ENCODE measurements at regions of chr10 and their contacts with region 1.

Region 1: DNA sequence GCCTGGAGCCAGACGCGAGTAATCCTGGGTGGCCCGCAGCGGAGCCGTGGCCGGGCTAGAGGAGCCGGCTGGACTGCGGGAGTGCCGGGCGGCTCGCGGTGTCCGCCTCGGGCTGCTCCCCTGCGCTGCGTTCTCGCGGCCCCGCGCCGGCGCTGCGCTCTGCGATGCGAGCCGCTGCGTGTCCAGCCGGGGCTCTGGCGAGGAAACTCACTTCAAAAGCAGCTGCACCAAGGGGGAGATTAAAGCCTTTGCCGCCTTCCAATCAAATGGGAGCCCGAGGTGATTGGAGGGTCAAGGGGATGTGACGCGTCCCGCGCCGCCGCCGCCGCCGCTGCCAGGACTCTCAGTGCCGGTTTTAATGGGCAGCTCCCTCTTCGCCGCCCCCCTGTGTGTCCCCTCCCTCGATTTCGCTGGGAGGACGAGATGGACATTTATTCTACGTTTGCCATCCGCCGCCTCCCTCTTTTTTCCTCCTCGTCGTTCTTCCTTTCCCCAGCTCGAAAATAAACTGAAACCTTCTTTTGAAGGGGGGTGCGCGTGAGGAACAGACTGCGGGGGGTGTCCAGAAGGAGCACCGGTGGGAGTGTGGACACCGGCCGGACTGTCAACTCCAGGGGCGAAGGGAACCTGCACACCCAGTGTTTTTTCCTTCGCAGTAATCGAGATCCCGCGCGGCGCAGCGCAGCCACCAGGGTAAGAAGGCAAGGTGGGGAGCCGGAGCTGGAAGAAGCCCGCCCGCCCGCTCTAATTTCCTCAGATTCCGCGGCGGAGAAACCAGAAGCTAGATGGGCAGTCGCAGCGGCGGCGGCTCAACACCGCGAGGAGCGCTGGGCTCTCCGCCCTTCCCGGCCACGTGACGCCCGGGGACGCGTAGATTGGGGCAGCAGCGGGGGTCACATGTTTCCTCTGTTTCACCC is at the start of gene ZNF503:
- DNase-seq: peak; percentile 94
- ATAC-seq: peak; percentile 49
- H3K4me3 Mint-ChIP-seq: peak within 1 kb of the TSS; percentile 70
- H3K27ac Mint-ChIP-seq: peak within 1 kb of the TSS; percentile 46; the same call in 1 of the 2 replicates
- H3K4me1 Mint-ChIP-seq: peaks cover 42% of the 10 kb centered on the region
- H3K27me3 Mint-ChIP-seq: peaks cover 97% of the 10 kb centered on the region
- CTCF ChIP-seq: no peak
- total RNA-seq, gene ZNF503: 0.25 to 0.39 TPM (median 0.34 TPM) in 3 replicates

Region 2: DNA sequence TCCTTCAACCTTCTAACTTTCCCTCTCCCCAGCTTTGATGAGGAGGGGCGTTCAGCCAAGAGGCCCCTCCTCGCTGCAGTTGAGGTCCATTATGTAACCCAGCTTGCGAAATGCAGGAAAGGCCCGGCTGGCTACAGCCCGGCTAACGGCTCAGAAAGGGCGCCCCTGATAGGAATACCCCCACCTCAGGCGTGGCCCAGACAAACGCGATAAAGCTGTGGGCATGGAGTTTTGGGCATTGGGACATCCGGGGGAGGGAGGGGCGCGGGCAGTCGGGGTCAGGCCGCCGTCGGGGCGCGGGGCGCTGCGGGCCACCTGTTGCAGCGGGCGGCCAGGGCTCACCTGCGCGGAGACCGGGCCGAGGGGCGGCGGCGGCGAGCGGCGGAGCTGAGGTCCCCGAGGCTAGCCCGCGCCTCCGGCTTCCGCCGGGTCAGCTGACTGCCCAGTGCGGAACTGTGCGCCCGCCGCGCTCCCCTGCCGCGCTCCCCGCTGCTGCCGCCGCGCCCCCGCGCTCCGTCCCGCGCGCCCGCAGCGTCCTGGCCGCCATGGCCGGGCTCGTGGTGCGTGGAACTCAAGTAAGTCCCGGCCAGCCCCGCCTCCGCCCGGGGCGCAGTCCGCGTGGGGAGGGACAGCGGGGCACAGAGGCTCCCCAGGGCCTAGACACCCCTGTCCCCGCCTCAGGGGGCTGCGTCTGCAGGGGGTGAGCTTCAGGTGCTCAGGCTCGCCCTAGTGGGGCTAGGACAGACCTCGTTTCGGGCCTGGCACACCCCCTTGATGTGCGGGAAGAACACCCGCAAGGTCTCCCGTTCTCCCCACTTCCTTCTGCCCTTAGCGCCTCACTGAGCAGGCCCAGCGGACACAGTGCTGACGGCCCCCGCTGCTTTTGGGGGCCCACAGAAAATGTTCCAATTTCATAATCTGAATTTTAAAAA is 29.6 kb after region 1 on chr10 and contains the start of gene LRMDA:
- CTCF ChIA-PET with region 1: interaction called, 12 read pairs
- POLR2A ChIA-PET with region 1: no interaction called
- DNase-seq: peak; percentile 38
- ATAC-seq: peak; percentile 41
- H3K4me3 Mint-ChIP-seq: peak within 1 kb of the TSS; percentile 68
- H3K27ac Mint-ChIP-seq: no peak within 1 kb of the TSS
- H3K4me1 Mint-ChIP-seq: peaks cover 42% of the 10 kb centered on the region
- H3K27me3 Mint-ChIP-seq: peaks cover 96% of the 10 kb centered on the region
- CTCF ChIP-seq: no peak
- total RNA-seq, gene LRMDA: 0.48 to 0.92 TPM (median 0.78 TPM) in 3 replicates

Region 3: DNA sequence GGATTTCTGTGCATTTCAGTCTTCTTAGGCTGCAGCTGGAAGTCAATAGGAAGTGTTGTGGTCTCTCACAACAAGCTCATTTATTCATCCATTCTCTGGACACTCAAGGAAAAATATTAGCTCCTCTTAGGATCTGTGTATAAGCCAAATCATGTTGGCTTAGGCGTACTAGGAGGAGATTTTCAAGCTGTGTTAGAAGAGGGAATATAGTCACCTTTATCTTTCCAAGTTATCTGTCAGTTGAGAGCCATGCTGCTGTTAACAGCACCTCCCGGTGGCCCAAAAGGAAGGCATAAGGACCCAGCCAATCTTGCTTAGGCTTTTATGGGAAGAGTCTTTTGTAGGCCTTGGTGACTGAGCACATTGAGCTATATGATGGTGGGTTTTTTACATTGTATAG is 249.6 kb after region 1 on chr10:
- CTCF ChIA-PET with region 1: interaction called, 30 read pairs
- POLR2A ChIA-PET with region 1: no interaction called
- DNase-seq: peak; percentile 41
- ATAC-seq: peak; percentile 74
- H3K4me3 Mint-ChIP-seq: no peak overlapping the region
- H3K27ac Mint-ChIP-seq: no peak overlapping the region
- H3K4me1 Mint-ChIP-seq: peaks cover 2% of the 10 kb centered on the region; the same call in 1 of the 2 replicates
- H3K27me3 Mint-ChIP-seq: peaks cover 55% of the 10 kb centered on the region
- CTCF ChIP-seq: no peak